ENCODE measurements at regions of chr2 and their contacts with region 1.

Region 1: DNA sequence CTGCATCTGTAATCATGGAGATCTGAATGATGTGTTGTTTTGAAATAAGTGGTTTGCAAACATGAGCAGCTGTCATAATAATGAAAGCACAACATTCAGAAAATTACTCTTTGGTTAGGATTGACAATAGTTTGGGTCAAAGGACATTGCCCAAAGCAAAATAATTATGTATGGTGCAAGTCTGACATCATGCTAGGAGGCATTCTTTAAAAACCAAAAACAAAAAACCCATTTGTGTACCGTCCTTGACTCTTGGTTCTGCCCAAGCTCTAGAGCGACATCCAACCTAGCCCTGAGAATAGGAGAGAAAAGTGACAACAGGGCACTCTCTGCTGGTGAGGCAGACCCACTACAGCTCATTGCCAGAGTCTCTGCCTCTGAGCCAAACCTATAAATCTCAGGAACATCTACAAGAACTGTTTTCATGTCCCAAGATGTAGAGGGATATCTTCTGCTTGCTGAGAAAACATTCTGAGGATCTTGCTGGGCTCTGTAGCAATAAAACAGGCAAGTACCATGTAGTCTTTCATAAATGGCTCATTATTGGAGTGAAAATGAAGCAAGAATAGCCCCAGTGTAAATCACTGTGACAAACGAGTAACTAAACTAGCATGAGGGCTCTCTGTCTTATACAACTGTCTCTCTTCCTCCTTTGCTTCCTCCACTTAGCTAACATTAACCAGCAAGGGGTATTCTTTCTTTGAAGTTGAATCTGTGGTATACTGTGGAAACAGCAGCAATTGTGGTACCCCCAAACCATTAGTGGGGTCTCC is 266.8 kb upstream of the CXCR4 start:
- DNase-seq: peak; percentile 61
- ATAC-seq: peak; percentile 50
- H3K4me3 Mint-ChIP-seq: no peak overlapping the region
- H3K27ac Mint-ChIP-seq: peak overlapping the region; percentile 35
- H3K4me1 Mint-ChIP-seq: peaks cover 43% of the 10 kb centered on the region
- H3K27me3 Mint-ChIP-seq: no peaks in the 10 kb centered on the region
- CTCF ChIP-seq: peak; percentile 89

Region 2: GRCh38 chr2:135820003-135820618 is 564.6 kb before region 1 on chr2:
- CTCF ChIA-PET with region 1: interaction called, 6 read pairs
- POLR2A ChIA-PET with region 1: no interaction called
- intact Hi-C with region 1: loop called (anchors 1 kb)
- DNase-seq: peak; percentile 98
- ATAC-seq: peak; percentile 93
- H3K4me3 Mint-ChIP-seq: peak overlapping the region; percentile 68
- H3K27ac Mint-ChIP-seq: peak overlapping the region; percentile 91
- H3K4me1 Mint-ChIP-seq: peaks cover 56% of the 10 kb centered on the region
- H3K27me3 Mint-ChIP-seq: no peaks in the 10 kb centered on the region
- CTCF ChIP-seq: no peak

Region 3: DNA sequence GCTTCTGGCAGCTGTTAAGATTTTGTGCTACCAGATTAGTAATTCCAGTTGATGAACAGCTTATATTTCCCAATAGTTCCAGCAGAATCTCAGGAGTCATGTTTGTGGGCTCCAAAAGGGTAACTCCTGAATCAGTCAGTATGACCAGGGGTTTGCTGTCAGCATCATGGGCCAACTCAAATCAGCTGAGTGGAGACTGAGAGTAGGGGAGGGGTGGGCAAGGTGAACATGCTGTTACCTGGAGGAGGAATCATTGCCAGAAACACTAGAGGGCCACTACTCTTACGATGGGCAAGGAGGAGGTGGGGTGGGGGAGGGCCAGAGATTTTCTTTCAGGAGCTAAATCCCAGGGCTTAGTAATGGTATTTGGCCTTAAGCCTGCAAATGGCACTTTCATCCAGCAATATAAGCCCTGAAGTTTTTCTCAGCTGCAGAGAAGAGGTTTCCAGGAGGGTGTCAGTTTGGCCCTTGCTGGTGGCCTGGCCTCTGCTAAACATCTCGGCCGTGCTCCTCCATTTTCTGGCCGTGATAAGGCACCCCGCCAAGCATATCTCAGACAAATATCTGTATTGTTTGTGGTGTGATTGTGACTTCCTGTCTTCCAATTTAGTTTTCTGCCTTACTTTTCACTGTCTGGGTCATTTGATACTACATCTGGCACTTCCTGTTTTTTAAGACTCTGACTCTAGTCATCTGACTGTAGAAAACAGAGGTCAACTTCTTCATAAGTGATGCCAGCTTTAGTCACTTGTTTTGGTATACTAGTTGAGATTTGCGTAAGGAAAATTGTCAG is 146.2 kb before region 1 on chr2:
- CTCF ChIA-PET with region 1: interaction called, 9 read pairs
- POLR2A ChIA-PET with region 1: no interaction called
- intact Hi-C with region 1: loop called (anchors 5 kb)
- DNase-seq: peak; percentile 48
- ATAC-seq: peak; percentile 77
- H3K4me3 Mint-ChIP-seq: peak overlapping the region; percentile 4
- H3K27ac Mint-ChIP-seq: peak overlapping the region; percentile 88
- H3K4me1 Mint-ChIP-seq: peaks cover 54% of the 10 kb centered on the region
- H3K27me3 Mint-ChIP-seq: no peaks in the 10 kb centered on the region
- CTCF ChIP-seq: no peak

Region 4: DNA sequence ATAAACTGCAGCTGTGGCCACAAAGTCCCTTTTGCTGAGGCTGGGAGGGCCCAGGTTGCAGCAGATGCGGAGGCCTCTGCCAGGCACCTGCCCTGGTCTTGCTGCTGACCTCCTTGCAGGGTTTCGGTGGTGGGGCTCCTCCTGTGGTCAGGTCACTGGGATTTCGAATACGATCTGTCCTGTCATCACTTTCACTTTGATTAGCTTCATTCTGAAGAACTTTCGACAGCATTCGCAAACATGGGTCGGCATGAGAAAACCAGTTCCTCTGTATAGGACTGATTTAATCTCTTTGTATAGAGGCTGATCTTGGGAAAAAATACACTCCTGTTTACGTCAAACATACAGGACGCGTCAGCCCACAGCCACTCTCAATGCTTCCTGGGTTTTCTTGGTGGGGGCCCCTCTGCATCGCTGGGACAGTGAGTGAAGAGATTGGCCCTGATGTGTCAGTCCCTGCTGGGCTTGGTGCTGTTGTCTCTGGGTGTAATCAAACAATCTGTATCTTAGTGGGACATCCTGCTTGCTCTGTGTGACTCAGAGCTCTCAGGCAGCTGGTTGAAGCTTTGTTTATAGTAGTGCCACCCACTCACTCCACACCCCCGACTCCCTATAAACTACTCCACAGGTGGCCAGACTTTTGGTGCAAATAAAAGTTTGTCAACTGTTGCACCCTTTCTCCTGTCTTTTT is 57.4 kb before region 1 on chr2:
- CTCF ChIA-PET with region 1: no interaction called
- POLR2A ChIA-PET with region 1: interaction called, 8 read pairs
- intact Hi-C with region 1: loop called (anchors 2 kb)
- DNase-seq: peak; percentile 88
- ATAC-seq: peak; percentile 95
- H3K4me3 Mint-ChIP-seq: peak overlapping the region; percentile 44
- H3K27ac Mint-ChIP-seq: peak overlapping the region; percentile 83
- H3K4me1 Mint-ChIP-seq: peaks cover 58% of the 10 kb centered on the region
- H3K27me3 Mint-ChIP-seq: no peaks in the 10 kb centered on the region
- CTCF ChIP-seq: no peak

Region 5: GRCh38 chr2:136411946-136412345 is 27.2 kb after region 1 on chr2:
- CTCF ChIA-PET with region 1: no interaction called
- POLR2A ChIA-PET with region 1: no interaction called
- intact Hi-C with region 1: no loop called
- DNase-seq: no peak
- ATAC-seq: no peak
- H3K4me3 Mint-ChIP-seq: no peak overlapping the region
- H3K27ac Mint-ChIP-seq: no peak overlapping the region
- H3K4me1 Mint-ChIP-seq: no peaks in the 10 kb centered on the region
- H3K27me3 Mint-ChIP-seq: peaks cover 6% of the 10 kb centered on the region
- CTCF ChIP-seq: no peak